Activated CD8-positive, alpha-beta T cell treated with anti-CD3 and anti-CD28 coated beads, Interleukin-2, amount 10 ng/mL, durations not matched to agents 7 days and 5 days (primary cell): ENCODE measurements at regions of chrX and their contacts with region 1.

Region 1: GRCh38 chrX:70433848-70434351 is 10.7 kb upstream of the DLG3 start:
- DNase-seq: peak; percentile 84
- ATAC-seq: peak; percentile 85
- H3K4me3 Mint-ChIP-seq: peak overlapping the region; percentile 86
- H3K27ac Mint-ChIP-seq: peak overlapping the region; percentile 89
- H3K4me1 Mint-ChIP-seq: peaks cover 36% of the 10 kb centered on the region
- H3K27me3 Mint-ChIP-seq: peaks cover 5% of the 10 kb centered on the region

Region 2: GRCh38 chrX:70554081-70554480 is 120.2 kb after region 1 on chrX:
- CTCF ChIA-PET with region 1: interaction called, 11 read pairs
- POLR2A ChIA-PET with region 1: no interaction called
- DNase-seq: no peak
- ATAC-seq: no peak
- H3K4me3 Mint-ChIP-seq: no peak overlapping the region
- H3K27ac Mint-ChIP-seq: no peak overlapping the region
- H3K4me1 Mint-ChIP-seq: peaks cover 10% of the 10 kb centered on the region
- H3K27me3 Mint-ChIP-seq: peaks cover 10% of the 10 kb centered on the region

Region 3: DNA sequence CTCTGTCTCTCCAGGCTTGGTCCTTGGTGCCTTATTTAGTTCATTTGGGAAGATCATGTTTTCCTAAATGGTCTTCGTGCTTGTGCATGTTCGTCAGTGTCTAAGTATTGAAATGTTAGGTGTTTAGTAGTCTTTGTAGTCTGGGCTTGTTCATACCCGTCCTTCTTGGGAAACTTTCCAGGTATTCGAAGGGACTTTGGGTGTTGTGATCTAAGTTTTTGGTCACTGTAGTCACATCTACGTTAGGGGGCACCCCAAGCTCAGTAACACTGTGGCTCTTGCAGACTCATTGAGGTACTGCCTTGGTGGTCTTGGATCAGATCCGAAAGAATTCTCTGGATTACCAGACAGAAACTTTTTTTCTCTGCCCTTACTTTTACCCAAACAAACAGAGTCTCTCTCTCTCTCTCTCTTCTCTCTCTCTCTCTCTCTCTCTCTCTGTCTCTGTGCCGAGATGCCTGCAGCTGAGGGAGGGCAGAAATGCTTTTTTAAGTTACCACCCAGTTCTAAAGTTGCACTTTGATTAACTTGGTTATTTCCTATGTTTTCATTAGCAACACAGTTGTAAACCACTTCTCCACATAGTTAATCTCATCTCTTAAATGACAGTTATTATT is 564.6 kb after region 1 on chrX:
- CTCF ChIA-PET with region 1: no interaction called
- POLR2A ChIA-PET with region 1: no interaction called
- DNase-seq: peak; percentile 32
- ATAC-seq: no peak
- H3K4me3 Mint-ChIP-seq: no peak overlapping the region
- H3K27ac Mint-ChIP-seq: no peak overlapping the region
- H3K4me1 Mint-ChIP-seq: no peaks in the 10 kb centered on the region
- H3K27me3 Mint-ChIP-seq: peaks cover 10% of the 10 kb centered on the region